ENCODE measurements at regions of chr3 and their contacts with region 1.

Region 1: GRCh38 chr3:40191850-40192448 is 117.6 kb upstream of the EIF1B start:
- DNase-seq: peak in 1 of 2 donors; percentile 66
- ATAC-seq: peak; percentile 75
- H3K4me3 ChIP-seq: no peak overlapping the region
- H3K27ac ChIP-seq: no peak overlapping the region
- H3K4me1 ChIP-seq: no peaks in the 10 kb centered on the region
- H3K27me3 ChIP-seq: no peaks in the 10 kb centered on the region

Region 2: GRCh38 chr3:40086890-40087888 is 104.8 kb before region 1 on chr3:
- intact Hi-C with region 1: no loop called
- DNase-seq: no peak
- ATAC-seq: no peak
- H3K4me3 ChIP-seq: no peak overlapping the region
- H3K27ac ChIP-seq: no peak overlapping the region
- H3K4me1 ChIP-seq: no peaks in the 10 kb centered on the region
- H3K27me3 ChIP-seq: no peaks in the 10 kb centered on the region

Region 3: DNA sequence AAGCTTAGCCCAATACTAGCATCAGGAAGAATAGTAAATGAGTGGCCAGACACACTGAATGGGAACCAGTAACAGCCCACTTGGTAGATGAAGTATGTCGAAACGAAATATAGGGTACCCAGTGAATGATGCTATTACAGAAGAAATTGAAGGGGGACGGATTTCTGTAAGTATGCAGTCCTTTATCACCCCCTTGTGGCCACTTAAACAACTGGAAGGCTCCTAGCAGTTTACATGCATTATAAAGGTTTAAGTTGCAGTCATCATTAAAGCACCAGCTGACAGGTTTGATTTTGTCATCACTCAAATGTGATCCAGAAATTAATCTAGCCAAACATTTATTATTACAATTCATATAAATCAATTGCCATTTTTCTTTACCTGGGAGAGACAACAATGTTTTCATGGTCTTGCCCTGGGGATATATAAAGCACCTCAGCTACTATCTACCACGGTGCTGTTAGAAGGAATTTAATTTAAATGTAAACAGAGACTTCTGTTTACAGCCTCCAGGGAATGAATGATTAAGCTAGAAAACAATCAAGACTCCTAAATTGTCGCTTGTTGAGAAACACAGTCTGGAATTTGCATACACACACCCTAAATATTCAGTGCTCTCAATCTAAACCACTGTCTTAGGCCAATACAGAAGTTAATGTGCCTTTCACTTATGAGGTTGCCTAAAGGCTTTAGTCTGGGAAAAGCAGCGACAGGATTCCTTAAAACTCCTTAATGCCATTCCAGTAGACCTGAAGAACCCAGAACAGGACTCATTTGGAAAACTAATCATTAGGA is 125.3 kb after region 1 on chr3:
- intact Hi-C with region 1: loop called (anchors 2 kb)
- DNase-seq: no peak
- ATAC-seq: no peak
- H3K4me3 ChIP-seq: no peak overlapping the region
- H3K27ac ChIP-seq: no peak overlapping the region
- H3K4me1 ChIP-seq: no peaks in the 10 kb centered on the region
- H3K27me3 ChIP-seq: no peaks in the 10 kb centered on the region

Region 4: DNA sequence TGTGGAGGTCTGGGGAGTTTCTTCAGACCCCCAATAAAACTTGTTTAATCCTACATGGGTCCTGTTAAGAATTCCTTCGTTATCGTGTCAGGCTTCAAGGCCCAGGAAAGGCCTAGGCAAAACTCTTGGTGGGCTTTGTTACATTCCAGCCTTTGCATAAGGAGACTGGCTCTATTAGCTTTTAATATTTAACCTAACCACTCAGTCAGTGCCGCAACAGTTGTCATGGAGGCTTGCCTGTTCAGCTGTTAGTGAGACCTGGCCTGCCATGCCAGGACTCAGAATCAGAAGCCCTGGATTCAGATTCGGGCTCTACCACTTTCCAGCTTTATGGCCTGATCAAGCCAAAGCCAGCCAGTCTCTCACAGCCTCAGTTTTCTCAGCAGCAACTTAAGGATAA is 137.1 kb after region 1 on chr3:
- intact Hi-C with region 1: no loop called
- DNase-seq: no peak
- ATAC-seq: no peak
- H3K4me3 ChIP-seq: no peak overlapping the region
- H3K27ac ChIP-seq: no peak overlapping the region
- H3K4me1 ChIP-seq: no peaks in the 10 kb centered on the region
- H3K27me3 ChIP-seq: no peaks in the 10 kb centered on the region